Activated CD8-positive, alpha-beta T cell treated with anti-CD3 and anti-CD28 coated beads for 36 hours (primary cell): ENCODE measurements at regions of chr20 and their contacts with region 1.

Region 1: GRCh38 chr20:37564388-37565133 is 36.9 kb upstream of the BLCAP start:
- DNase-seq: peak; percentile 43
- ATAC-seq: peak; percentile 71
- H3K4me3 Mint-ChIP-seq: no peak overlapping the region
- H3K27ac Mint-ChIP-seq: no peak overlapping the region
- H3K4me1 Mint-ChIP-seq: no peaks in the 10 kb centered on the region
- H3K27me3 Mint-ChIP-seq: peaks cover 31% of the 10 kb centered on the region
- CTCF ChIP-seq: peak; percentile 98

Region 2: DNA sequence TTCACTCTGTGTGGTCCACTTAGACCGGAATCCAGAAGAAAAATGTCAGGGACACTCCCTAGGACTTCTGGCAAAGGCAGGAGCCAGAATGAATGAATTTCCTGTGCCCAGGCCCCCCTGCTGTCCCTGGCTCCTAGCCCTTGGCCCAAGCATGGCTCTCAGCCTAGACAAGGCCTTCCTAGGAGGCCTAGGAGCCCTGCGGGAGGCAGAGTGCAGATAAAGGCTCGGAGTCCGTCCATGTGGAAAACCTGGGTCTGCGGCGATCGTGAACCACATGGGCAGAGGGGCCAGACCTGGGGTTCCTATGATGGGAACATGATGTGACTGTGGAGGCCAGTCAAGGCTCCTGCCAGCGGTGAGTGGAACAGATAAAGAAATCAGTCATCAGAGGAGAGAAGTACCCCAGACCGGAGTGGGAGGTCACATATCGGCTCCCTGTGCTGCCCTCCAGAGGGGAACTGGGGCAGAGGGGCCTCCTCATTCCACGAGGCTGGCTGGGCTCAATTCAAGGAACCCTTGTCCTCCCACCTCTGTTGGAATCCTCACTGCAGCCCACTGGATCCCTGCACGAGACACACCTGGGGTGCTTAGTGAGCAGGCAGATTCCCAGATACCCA is 332.5 kb after region 1 on chr20:
- CTCF ChIA-PET with region 1: no interaction called
- POLR2A ChIA-PET with region 1: no interaction called
- intact Hi-C with region 1: loop called (anchors 10 kb)
- DNase-seq: no peak
- ATAC-seq: no peak
- H3K4me3 Mint-ChIP-seq: no peak overlapping the region
- H3K27ac Mint-ChIP-seq: no peak overlapping the region
- H3K4me1 Mint-ChIP-seq: peaks cover under 1% of the 10 kb centered on the region
- H3K27me3 Mint-ChIP-seq: peaks cover 22% of the 10 kb centered on the region
- CTCF ChIP-seq: no peak

Region 3: GRCh38 chr20:37990571-37991151 is 426.1 kb after region 1 on chr20:
- CTCF ChIA-PET with region 1: interaction called, 6 read pairs
- POLR2A ChIA-PET with region 1: no interaction called
- intact Hi-C with region 1: loop called (anchors 10 kb)
- DNase-seq: peak; percentile 84
- ATAC-seq: peak; percentile 91
- H3K4me3 Mint-ChIP-seq: no peak overlapping the region
- H3K27ac Mint-ChIP-seq: peak overlapping the region; percentile 60
- H3K4me1 Mint-ChIP-seq: peaks cover 18% of the 10 kb centered on the region
- H3K27me3 Mint-ChIP-seq: no peaks in the 10 kb centered on the region
- CTCF ChIP-seq: no peak